ENCODE measurements at regions of chr2 and their contacts with region 1.

Region 1: GRCh38 chr2:180716186-180717180 is 263.9 kb upstream of the UBE2E3 start:
- DNase-seq: no peak
- ATAC-seq: no peak
- H3K4me3 ChIP-seq: no peak overlapping the region
- H3K27ac ChIP-seq: no peak overlapping the region
- H3K4me1 ChIP-seq: no peaks in the 10 kb centered on the region; a peak in 1 of 5 replicates
- H3K27me3 ChIP-seq: no peaks in the 10 kb centered on the region
- CTCF ChIP-seq: no peak
- EP300 ChIP-seq: no peak
- POLR2A ChIP-seq: no peak
- RAD21 ChIP-seq: no peak

Region 2: GRCh38 chr2:181780047-181780651 is 1063.7 kb after region 1 on chr2:
- CTCF ChIA-PET with region 1: no interaction called
- POLR2A ChIA-PET with region 1: no interaction called
- in situ Hi-C with region 1: no loop called
- intact Hi-C with region 1: loop called (anchors 10 kb)
- DNase-seq: no peak
- ATAC-seq: no peak
- H3K4me3 ChIP-seq: no peak overlapping the region
- H3K27ac ChIP-seq: no peak overlapping the region
- H3K4me1 ChIP-seq: no peaks in the 10 kb centered on the region; a peak in 1 of 5 replicates
- H3K27me3 ChIP-seq: no peaks in the 10 kb centered on the region
- CTCF ChIP-seq: no peak
- EP300 ChIP-seq: no peak
- POLR2A ChIP-seq: no peak
- RAD21 ChIP-seq: no peak

Measured in K562 (cell line).